GM10248 (cell line): ENCODE measurements at regions of chr10 and their contacts with region 1.

Region 1: DNA sequence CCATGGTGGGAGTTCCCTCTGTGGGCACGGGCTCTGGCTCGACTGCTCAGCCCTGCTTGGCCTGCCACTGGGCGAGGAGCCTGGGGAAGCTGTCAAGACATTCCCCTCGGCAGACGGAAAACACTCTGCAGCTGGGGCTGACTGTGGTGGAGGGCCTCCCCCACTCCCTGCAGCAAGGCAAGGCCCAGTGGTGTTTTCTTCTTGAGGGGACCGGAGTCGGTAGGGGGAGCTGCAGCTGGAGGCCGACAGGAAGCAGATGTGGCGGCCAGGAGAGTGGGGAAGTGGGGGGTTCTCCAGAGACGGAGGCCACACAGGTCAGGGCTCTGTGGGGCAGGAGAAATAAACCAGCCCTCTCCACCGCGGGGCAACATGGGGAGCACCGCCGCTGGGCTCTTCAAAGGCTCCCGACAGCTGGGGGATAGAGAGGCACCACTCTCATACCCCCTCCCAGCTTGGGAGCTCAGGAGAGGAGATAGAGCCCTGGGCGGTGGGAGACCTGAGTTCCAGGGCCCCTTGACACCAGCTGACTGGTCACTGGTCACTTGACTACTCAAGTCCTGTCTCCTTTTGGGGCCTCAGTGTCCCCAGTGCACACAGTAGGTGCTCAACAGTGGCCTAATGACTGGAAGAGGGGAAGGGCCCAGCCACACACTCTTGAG is 43.4 kb downstream of the PPIF start:
- DNase-seq: no peak
- CTCF ChIP-seq: peak; percentile 26

Region 2: DNA sequence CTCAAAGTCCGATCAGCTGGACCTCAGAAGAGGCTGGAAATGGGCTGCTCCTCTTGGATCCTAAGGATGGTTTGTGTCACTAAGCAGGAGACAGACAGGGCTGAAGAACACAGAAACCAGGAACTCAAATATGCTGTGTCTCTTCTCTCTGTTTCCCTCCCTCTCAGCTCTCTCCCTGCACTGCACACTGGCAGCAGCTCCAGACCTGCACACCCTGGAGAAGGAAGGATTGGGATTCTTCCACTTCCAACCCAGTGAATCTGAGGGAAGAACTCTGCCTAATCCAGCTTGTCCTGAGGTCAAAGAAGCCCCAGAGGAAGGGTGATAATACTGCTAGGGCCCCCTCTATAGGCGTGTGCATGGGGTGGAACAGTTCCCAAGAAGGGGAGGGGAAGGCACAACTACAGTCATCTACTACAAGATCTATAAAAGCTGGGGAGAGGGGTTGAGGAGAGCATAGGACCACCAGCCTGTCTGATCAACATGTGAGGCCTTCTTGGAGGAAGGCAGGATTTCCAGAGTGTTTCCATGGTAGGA is 77.4 kb after region 1 on chr10:
- CTCF ChIA-PET with region 1: interaction called, 10 read pairs
- POLR2A ChIA-PET with region 1: no interaction called
- DNase-seq: no peak
- CTCF ChIP-seq: no peak